GM13976 (cell line): ENCODE measurements at regions of chr6 and their contacts with region 1.

Region 1: DNA sequence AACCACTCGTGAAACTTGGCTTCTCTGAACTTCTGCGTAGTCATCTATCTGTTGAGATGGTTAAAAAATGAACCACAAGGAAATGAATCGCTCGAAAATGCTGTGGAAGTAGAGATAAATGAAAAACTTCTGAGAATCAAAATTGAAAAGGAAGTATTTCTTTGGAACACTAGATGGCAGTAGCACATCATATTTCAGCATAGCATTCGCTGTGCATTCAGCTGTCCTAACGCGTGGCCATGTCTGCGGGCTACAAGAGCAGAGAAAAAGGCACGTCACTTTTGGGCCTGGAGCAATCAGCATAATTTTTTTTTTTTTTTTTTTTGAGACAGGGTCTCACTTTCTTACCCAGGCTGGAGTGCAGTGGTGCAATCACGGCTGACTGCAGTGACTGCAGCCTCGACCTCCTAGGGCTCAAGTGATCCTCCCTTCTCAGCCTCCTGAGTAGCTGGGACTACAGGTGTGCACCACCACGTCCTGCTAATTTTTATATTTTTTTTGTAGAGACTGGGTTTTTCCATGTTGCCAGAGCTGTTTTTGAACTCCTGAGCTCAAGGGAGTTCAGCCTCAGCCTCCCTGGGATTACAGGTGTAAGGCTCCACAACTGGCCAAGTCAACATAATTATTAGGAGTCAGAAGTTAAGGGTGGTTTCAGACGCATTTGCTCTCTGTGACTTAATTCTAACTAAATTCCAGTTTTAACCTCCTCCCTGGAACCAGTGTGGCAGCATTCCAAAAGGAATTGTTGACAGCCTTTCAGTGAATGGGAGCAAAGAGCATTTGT is 8.8 kb upstream of the PERP start:
- DNase-seq: peak; percentile 52
- CTCF ChIP-seq: peak; percentile 50

Region 2: DNA sequence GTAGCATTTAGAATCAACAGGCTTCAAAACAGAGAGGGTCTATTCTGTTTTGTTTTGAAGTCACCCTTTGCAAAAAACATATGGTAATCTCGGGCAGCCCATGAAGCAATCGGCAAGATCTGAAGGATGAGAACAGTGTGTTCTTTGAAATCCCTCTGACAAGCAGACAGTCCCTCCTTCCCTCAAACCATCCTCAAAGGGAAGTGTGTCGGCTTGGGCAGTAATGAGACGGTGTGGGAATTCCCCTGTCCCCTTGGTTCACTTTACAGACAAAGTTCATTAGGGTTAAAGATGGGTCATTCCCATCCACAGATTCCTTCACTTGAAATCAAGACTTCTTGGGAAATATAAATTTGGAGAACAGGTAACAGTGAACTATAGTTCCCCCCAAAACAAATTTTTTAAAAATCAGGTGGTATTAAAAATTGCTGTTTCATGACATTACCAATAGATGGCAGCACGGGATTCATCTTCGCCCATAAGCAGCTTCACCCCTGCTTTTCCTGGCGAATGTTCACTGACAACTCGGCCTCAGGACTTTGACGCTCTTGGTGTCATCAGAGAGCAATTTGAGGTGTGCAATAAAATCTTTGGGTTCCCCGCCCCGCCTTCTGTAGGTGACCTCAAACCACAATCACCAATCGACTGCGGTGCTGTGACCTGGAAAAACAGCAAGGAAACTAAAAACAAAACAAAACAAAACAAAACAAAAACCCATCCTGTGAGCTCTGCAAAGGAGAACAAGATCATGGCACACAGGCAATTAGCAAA is 408.3 kb before region 1 on chr6:
- in situ Hi-C with region 1: loop called (anchors 25 kb)
- DNase-seq: peak; percentile 59
- CTCF ChIP-seq: peak; percentile 38

Region 3: GRCh38 chr6:138001750-138002349 is 114.2 kb before region 1 on chr6:
- in situ Hi-C with region 1: loop called (anchors 10 kb)
- DNase-seq: peak; percentile 65
- CTCF ChIP-seq: peak; percentile 79

Region 4: DNA sequence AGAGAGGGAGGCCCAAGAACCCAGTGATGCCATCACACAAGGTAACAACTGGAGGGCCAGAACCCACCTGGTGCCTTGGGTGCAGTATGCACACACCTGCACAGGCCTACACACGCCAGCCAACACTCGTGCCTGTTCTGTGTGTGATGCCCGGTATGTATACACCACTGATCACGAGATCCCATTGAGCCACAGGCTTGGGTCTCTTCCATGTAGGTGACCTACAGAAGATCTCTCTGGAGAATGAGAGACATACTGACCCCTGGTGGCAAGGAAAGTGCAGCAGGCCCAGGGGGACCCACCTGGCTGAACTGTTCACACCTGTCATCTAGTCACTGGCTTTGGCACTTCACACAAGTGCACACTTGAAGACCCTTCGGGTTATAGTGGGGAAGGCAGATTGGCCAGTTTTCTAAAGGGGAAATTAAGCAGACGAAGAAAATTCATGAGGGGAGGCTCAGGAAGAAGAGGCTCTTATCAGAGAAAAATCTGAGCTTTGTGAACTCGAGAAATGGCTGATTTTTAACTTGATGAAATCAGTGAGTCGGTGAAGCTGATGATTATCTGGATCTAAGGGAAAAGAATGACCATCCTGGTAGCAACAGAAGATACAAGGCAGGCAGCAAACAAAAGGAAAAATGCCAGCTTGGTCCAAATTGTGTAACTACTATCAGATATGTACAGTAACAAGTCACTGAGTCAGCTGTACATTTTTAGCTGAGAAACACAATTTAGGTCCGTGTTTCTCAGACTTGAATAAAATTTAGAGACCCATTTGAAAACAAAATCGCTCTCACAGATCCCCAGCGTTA is 171.3 kb after region 1 on chr6:
- in situ Hi-C with region 1: loop called (anchors 10 kb)
- DNase-seq: peak; percentile 74
- CTCF ChIP-seq: peak; percentile 59

Region 5: GRCh38 chr6:138517635-138518034 is 401.6 kb after region 1 on chr6:
- in situ Hi-C with region 1: loop called (anchors 10 kb)
- DNase-seq: peak; percentile 52
- CTCF ChIP-seq: peak; percentile 70